AG04449 (cell line): ENCODE measurements at regions of chr6 and their contacts with region 1.

Region 1: DNA sequence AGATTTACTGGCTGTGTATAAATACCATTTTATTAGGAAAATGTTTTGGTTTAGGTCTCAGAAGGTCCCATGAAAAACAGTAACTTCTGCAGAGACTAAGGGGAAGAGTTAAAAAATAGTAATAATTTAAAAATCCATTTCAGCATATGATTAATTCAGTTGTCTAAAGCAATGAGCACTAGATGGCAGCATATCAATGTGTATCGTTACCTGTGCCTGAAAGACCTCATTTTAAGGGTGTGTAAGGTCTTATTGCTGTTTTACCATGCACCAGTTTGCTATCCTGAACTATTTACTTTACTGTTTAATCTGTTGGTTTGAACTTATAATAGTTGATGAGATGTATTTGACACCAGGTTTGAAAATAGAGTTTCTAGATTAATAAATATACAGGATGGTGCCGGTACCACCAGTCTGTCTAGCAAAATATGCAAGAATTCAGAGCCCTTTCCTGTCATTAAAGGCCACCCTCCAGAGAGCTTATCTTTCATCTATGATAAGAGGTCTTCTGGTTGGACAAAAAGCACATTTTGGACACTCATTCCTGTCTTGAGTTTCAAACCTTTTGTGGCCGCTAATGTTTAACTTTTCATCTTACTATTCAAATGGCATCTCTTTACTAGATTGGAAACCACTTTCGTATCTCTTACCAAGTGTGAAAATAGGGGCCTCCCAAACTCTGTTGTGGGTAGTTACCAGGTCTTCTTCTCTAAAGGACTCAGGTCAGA is 8.9 kb upstream of the AHI1 start:
- DNase-seq: no peak
- H3K4me3 ChIP-seq: no peak overlapping the region
- CTCF ChIP-seq: peak; percentile 53

Region 2: GRCh38 chr6:135183532-135184440 is 322.6 kb before region 1 on chr6:
- CTCF ChIA-PET with region 1: no interaction called
- POLR2A ChIA-PET with region 1: no interaction called
- DNase-seq: no peak
- H3K4me3 ChIP-seq: peak overlapping the region; percentile 64
- CTCF ChIP-seq: peak; percentile 39

Region 3: GRCh38 chr6:135397172-135397952 is 109.1 kb before region 1 on chr6:
- CTCF ChIA-PET with region 1: no interaction called
- POLR2A ChIA-PET with region 1: no interaction called
- DNase-seq: no peak
- H3K4me3 ChIP-seq: no peak overlapping the region
- CTCF ChIP-seq: no peak

Region 4: DNA sequence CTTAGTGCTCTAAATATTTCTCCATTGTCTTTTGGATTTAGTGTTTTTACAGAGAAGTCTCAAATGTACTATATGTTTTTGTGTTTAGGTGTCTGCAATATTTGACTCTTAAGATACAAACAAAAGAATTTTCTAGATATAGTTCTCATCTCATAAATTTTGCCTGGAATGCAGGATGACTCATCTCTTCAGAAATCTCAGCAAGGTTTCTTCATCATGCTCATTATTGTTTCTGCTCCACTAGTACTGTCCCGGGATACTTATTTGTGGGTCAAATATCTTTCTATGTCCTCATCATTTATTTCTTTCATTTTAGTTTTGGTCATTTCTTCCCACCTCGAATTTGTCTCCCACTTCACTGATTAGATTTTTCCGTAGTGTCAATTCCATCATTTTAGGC is 18.4 kb before region 1 on chr6:
- CTCF ChIA-PET with region 1: no interaction called
- POLR2A ChIA-PET with region 1: no interaction called
- DNase-seq: no peak
- H3K4me3 ChIP-seq: no peak overlapping the region
- CTCF ChIP-seq: no peak

Region 5: DNA sequence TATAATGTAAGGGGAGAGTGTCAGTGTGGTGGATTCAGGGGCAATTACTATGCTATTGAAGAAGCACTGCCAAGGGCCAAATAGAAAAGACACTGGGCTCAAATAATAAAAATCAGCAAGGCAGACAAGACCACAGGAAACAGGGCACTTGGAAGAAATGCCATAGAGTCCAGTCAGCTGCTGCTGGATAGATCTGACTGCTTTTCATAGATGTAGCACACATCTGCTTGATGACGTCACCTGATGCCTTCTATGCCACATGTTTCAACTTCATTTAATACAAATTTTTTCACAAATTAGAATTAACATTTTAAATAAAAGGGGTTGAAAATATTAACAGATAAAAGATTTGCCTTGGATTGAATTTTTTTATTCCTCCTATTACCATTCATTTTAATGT is 15.0 kb after region 1 on chr6:
- CTCF ChIA-PET with region 1: interaction called, 21 read pairs
- POLR2A ChIA-PET with region 1: no interaction called
- DNase-seq: no peak
- H3K4me3 ChIP-seq: no peak overlapping the region
- CTCF ChIP-seq: no peak

Region 6: DNA sequence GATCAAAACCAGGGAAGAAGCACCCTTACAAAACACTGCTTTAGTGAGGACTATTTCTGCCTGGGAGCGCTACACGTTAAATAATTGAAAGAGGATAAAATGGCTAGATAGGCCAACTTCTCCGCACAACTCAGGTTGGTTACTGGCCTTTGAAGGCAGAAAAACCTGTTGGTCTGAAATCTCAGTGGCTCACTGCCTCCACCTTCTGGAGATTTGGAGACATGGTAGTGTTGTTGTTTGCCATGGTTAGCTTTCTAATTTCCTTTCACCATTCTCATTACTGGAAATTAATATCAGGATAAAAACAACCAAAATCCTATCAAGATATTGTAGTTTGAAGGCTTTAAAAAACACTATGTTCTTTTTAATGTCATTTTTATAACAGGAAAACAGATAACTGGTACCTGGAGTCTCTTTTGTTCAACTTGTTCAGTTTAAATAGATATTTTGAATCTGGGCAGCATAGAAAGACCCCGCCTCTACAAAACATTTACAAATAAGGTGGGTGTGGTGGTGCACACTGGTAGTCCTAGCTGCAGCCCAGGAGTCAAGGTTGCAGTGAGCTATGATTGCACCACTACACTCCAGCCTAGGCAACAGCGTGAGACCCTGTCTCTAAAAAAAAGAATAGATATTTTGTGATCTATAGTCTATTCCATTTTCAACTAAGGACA is 810.7 kb after region 1 on chr6:
- CTCF ChIA-PET with region 1: interaction called, 27 read pairs
- POLR2A ChIA-PET with region 1: no interaction called
- DNase-seq: no peak
- H3K4me3 ChIP-seq: no peak overlapping the region
- CTCF ChIP-seq: peak; percentile 79